Activated naive CD4-positive, alpha-beta T cell treated with anti-CD3 and anti-CD28 coated beads, Interleukin-2, amount 10 ng/mL, durations not matched to agents 7 days and 5 days (primary cell): ENCODE measurements at regions of chr16 and their contacts with region 1.

Region 1: DNA sequence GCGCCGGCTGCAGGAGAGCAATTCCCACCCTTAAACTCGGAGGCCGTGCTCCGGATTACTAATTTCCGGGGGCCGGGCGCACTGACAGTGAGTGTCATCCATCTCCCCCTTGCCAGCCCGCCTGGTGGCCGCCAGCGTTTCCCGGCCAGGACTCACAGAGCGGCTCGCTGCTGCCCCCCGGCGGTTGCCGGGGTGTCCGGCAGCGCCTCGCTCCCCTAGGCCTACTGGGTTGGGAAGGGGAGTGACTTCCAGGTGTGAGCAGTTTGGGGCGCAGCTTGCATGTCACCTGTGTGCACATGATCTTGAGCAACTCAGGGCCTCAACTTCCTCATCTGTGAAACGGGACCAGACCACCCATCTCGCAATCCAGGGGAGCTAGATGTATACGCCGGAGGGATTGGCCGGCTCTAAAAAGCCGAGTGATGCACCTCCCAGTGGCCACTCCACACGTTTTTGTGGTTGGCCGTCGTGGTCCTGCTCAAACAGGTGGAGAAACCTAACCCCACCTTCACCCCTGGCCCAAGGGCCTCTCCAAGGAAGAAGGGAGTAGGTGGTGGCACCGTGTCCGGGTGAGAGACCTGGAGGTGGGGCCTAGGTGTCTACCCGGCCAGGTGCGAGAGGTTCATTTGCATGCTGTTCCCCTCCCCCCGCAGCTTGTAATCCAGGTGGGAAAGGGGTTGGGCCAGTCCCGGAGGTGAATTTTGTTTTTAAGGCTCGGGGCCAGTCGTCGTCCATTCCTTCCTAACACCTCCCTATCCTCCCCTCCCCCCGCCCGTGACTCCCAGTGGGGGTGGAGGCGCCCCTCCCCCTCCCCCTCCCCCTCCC is 2.4 kb upstream of the GSE1 start:
- DNase-seq: peak; percentile 89
- H3K4me3 Mint-ChIP-seq: peak overlapping the region; percentile 62
- H3K27ac Mint-ChIP-seq: no peak overlapping the region
- H3K4me1 Mint-ChIP-seq: peaks cover 33% of the 10 kb centered on the region
- H3K27me3 Mint-ChIP-seq: peaks cover 84% of the 10 kb centered on the region

Region 2: GRCh38 chr16:85420501-85421337 is 190.0 kb before region 1 on chr16:
- CTCF ChIA-PET with region 1: interaction called, 93 read pairs
- DNase-seq: peak; percentile 76
- H3K4me3 Mint-ChIP-seq: no peak overlapping the region
- H3K27ac Mint-ChIP-seq: no peak overlapping the region
- H3K4me1 Mint-ChIP-seq: peaks cover 5% of the 10 kb centered on the region
- H3K27me3 Mint-ChIP-seq: peaks cover 26% of the 10 kb centered on the region

Region 3: GRCh38 chr16:85491058-85491771 is 119.5 kb before region 1 on chr16:
- CTCF ChIA-PET with region 1: interaction called, 29 read pairs
- DNase-seq: peak; percentile 62
- H3K4me3 Mint-ChIP-seq: no peak overlapping the region
- H3K27ac Mint-ChIP-seq: peak overlapping the region; percentile 55
- H3K4me1 Mint-ChIP-seq: peaks cover 11% of the 10 kb centered on the region
- H3K27me3 Mint-ChIP-seq: peaks cover 23% of the 10 kb centered on the region

Region 4: GRCh38 chr16:85528528-85529387 is 82.0 kb before region 1 on chr16:
- CTCF ChIA-PET with region 1: interaction called, 12 read pairs
- DNase-seq: peak; percentile 37
- H3K4me3 Mint-ChIP-seq: no peak overlapping the region
- H3K27ac Mint-ChIP-seq: no peak overlapping the region
- H3K4me1 Mint-ChIP-seq: no peaks in the 10 kb centered on the region
- H3K27me3 Mint-ChIP-seq: no peaks in the 10 kb centered on the region

Region 5: GRCh38 chr16:85554112-85554813 is 56.5 kb before region 1 on chr16:
- CTCF ChIA-PET with region 1: interaction called, 14 read pairs
- DNase-seq: peak; percentile 88
- H3K4me3 Mint-ChIP-seq: peak overlapping the region; percentile 81
- H3K27ac Mint-ChIP-seq: peak overlapping the region; percentile 93
- H3K4me1 Mint-ChIP-seq: peaks cover 39% of the 10 kb centered on the region
- H3K27me3 Mint-ChIP-seq: peaks cover 43% of the 10 kb centered on the region

Region 6: DNA sequence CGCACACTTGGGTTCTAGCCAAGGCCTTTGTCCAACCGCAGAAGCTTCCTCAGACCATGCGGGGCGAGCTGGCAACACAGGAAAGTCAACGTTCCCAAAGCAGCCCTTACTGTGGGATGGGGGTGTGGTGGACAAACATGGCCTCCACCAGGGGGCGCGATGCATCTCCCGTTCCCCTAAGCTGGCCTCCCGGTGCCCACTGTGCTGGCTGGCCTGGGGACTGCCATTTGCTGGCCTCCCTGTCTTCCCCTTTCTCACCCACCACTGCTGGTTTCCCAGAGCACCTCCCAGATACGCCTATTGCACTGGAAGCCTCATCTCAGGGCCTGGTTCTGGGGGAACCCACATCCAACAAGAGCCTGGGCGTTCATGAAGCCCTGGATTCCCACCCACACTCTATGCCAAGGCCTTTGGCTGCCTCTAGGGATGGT is 433.5 kb after region 1 on chr16:
- CTCF ChIA-PET with region 1: no interaction called
- DNase-seq: peak; percentile 54
- H3K4me3 Mint-ChIP-seq: no peak overlapping the region
- H3K27ac Mint-ChIP-seq: no peak overlapping the region
- H3K4me1 Mint-ChIP-seq: peaks cover 13% of the 10 kb centered on the region
- H3K27me3 Mint-ChIP-seq: peaks cover 73% of the 10 kb centered on the region